ENCODE measurements at regions of chr10 and their contacts with region 1.

Region 1: DNA sequence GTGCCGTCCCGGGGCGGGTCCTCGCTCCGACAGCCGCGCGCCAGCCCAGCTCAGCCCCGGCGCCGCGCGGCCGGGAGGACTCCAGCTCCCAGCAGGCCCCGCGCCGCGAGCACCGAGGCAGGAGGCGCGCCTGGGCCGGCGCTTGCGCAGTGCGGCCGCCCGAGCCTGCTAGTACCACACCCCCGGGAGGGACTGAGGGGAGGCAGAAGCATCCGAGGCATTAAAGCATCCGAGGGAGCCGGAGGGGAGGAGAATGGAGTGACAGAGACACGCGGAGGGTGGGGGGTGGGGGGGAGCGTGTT is at the start of gene GRK5:
- DNase-seq: peak; percentile 96
- H3K4me3 Mint-ChIP-seq: peak within 1 kb of the TSS; percentile 100
- H3K27ac Mint-ChIP-seq: peak within 1 kb of the TSS; percentile 91
- H3K4me1 Mint-ChIP-seq: peaks cover 38% of the 10 kb centered on the region
- H3K27me3 Mint-ChIP-seq: no peaks in the 10 kb centered on the region
- total RNA-seq, gene GRK5: 22.7 to 23.0 TPM

Region 2: GRCh38 chr10:118734475-118734874 is 472.8 kb before region 1 on chr10:
- CTCF ChIA-PET with region 1: no interaction called
- POLR2A ChIA-PET with region 1: no interaction called
- intact Hi-C with region 1: no loop called
- DNase-seq: no peak
- H3K4me3 Mint-ChIP-seq: no peak overlapping the region
- H3K27ac Mint-ChIP-seq: no peak overlapping the region
- H3K4me1 Mint-ChIP-seq: peaks cover 78% of the 10 kb centered on the region
- H3K27me3 Mint-ChIP-seq: no peaks in the 10 kb centered on the region

Region 3: DNA sequence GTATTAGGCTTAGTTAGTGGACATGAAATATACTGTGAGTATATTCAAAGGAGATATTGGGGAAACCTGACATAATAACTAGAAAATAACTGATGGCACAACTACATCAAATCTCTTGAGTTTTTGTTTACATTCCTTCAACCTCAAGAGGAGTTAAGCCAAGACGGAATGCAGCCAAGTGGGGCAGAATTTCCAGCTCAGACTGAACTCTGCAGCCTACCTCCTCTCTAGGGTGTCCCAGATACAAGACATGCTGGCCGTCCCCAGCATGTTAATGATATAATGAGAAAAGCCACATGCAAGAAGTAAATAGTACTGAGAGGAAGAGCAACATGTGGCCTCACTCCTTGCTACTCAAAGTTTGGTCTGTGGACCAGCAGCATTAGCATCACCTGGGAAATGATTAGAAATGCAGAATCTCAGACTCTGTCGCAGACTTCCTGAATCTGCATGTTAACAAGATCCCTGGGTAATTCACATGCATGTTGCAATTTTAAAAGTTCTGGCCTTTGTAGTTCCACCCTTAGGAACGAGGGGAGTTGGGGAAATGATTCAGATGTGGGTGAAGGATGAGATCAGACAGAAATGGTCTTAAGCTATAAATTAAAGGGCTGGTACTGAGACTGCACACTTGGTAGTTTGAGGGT is 334.1 kb before region 1 on chr10:
- CTCF ChIA-PET with region 1: no interaction called
- POLR2A ChIA-PET with region 1: no interaction called
- intact Hi-C with region 1: no loop called
- DNase-seq: no peak
- H3K4me3 Mint-ChIP-seq: no peak overlapping the region
- H3K27ac Mint-ChIP-seq: no peak overlapping the region
- H3K4me1 Mint-ChIP-seq: no peaks in the 10 kb centered on the region
- H3K27me3 Mint-ChIP-seq: peaks cover 31% of the 10 kb centered on the region

Region 4: DNA sequence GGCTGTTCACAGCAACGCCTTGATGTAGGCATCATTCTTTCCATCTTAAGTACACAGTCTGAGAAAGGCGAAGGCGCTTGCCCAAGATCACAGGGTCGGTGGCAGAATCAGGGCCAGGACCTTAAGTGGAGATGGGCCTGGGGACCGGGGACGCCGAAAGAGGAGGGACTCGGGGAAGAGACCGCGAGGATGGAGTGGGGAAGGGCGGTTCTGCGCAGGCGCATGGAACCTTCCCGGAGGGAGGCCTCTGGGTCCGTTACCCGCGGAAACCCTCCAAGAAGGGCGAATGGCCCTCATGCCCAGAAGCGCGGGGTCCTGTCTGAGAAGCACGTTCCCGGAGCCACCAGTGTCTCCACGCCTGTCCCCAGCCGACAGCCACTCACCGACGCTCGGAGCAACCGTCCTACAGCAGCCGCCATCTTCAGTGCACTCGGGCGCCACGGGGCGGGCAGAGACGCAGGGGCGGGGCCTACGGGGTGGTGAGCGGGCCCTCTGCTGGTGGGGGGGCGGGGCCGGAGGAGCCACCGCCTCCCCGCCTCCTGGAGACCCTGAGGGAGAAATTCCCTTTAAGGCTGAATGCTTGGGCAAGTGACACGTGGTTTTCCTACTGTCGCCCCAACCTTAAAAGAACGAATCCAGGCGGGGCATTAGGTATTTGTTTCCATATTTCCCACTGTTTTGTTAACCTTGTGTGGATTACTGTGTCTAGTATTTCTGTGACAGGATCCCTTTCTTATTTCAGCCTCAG is 28.8 kb before region 1 on chr10 and contains the start of gene PRDX3:
- CTCF ChIA-PET with region 1: interaction called, 17 read pairs
- POLR2A ChIA-PET with region 1: interaction called, 10 read pairs
- intact Hi-C with region 1: loop called (anchors 1 kb)
- DNase-seq: peak; percentile 96
- H3K4me3 Mint-ChIP-seq: peak within 1 kb of the TSS; percentile 88
- H3K27ac Mint-ChIP-seq: peak within 1 kb of the TSS; percentile 94
- H3K4me1 Mint-ChIP-seq: peaks cover 35% of the 10 kb centered on the region
- H3K27me3 Mint-ChIP-seq: no peaks in the 10 kb centered on the region
- total RNA-seq, gene PRDX3: 173 to 182 TPM

Region 5: DNA sequence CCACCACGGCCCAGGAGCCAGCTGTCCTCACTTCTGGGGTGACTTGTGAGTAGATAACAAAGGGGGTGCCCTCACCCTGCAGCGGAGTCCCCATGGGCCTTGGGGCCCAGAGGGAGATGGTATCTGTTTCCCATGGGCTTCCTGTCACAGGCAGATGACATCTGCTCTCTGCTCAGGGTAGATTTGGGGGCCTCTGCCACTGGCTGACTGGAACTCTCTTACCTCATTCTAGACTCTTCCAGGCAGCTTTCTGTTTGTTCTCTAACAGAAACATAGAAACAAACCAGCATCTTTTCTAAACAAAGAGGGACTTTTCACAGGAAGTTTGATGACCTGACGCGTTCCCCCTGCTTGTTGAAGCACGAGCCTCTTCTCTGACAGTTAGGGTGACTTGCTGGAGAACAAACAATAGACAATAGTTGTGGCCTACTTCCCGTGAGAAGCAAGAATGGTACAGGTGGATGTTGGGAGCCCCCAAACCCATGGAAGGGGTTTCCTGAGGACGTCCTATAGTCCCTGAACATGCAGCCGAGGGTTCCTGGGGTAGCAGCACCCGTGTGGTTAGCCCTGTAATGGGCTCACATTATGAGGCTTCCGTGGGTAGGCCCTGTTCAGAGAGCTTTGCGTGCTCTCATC is 61.7 kb after region 1 on chr10:
- CTCF ChIA-PET with region 1: interaction called, 6 read pairs
- POLR2A ChIA-PET with region 1: interaction called, 5 read pairs
- intact Hi-C with region 1: loop called (anchors 1 kb)
- DNase-seq: peak; percentile 83
- H3K4me3 Mint-ChIP-seq: peak overlapping the region; percentile 7
- H3K27ac Mint-ChIP-seq: peak overlapping the region; percentile 97
- H3K4me1 Mint-ChIP-seq: peaks cover 43% of the 10 kb centered on the region
- H3K27me3 Mint-ChIP-seq: no peaks in the 10 kb centered on the region

Region 6: DNA sequence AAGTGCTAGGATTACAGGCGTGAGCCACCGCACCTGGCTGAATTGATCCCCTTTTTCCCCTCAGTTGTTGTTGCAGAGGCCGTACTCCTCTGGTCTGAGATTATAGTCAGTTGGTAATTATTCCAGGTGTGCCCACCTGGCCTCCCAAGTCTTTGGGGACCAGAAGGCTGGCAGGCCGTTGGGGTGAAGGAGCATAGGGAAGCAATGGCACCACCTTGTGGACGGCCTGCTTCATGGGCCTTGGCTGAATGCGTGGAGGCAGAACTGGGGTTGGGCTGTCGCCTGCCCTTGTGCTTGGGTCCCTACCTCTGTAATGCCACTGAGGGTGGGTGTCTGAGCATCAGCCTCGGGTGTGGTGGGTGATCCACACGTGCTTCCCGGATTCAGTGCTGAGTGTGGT is 209.5 kb after region 1 on chr10:
- CTCF ChIA-PET with region 1: interaction called, 53 read pairs
- POLR2A ChIA-PET with region 1: interaction called, 5 read pairs
- intact Hi-C with region 1: loop called (anchors 1 kb)
- DNase-seq: peak; percentile 81
- H3K4me3 Mint-ChIP-seq: no peak overlapping the region
- H3K27ac Mint-ChIP-seq: no peak overlapping the region
- H3K4me1 Mint-ChIP-seq: no peaks in the 10 kb centered on the region
- H3K27me3 Mint-ChIP-seq: no peaks in the 10 kb centered on the region

Region 7: DNA sequence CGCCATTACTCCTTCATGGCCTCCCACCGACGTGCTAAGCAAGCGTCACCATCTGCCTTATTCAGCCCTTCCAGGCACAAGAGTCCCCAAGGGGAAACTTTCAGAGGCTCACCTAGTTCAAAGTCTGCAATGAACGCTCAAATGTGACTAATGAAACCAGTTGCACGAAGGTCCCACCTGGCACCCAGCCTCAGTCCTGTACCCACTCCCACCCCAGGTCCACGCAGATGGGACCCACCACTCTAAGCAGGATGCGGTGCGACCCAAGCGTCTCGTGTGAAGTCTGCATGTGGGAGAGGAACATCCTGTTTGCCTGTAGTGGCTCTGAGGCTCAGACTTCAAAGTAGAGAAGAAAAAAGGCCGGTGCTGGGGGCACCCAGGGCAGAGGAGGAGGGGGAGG is 294.9 kb after region 1 on chr10:
- CTCF ChIA-PET with region 1: no interaction called
- POLR2A ChIA-PET with region 1: no interaction called
- intact Hi-C with region 1: loop called (anchors 2 kb)
- DNase-seq: peak; percentile 88
- H3K4me3 Mint-ChIP-seq: peak overlapping the region; percentile 59
- H3K27ac Mint-ChIP-seq: peak overlapping the region; percentile 99
- H3K4me1 Mint-ChIP-seq: peaks cover 83% of the 10 kb centered on the region
- H3K27me3 Mint-ChIP-seq: no peaks in the 10 kb centered on the region

Region 8: DNA sequence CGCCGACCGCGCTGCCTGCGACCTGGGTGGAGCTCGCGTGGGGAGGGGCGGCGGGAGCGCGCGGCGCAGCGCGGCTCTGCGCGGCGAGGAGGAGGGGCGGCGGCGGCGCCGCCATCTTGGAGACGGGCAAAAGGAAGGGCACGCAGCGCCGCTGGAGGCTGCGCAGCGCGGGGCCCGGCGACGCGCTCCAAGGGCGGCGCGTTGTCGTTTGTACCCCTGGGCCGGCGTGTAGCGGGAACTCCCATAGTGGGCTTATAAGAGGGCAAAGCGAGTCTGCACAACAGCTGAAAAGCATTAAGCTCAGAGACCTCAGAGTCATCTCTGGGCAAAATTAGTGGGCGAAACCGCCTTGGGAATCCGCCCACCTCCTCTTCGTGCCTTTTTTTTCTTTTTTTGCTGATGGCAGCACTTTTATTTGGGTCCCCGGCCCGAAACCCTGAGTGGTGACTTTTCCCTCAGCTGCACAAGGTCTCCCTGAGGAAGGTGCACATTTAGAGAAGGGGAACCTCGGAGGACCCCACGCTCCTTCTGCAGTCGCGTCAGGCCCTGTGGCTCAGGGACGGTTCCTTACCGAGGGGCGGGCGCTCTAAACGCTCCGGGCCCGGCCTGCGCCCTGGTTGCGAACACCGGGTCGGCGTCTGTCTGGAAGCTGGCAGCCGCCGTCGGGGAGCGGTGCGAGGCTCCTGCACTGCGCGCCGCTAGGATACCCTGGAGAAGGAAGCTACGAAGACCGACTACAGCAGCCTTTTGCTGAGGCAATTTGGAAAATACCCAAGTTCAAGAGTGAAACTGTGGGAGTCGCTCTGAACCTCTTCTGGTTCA is 665.8 kb after region 1 on chr10:
- CTCF ChIA-PET with region 1: no interaction called
- POLR2A ChIA-PET with region 1: no interaction called
- intact Hi-C with region 1: loop called (anchors 5 kb)
- DNase-seq: peak; percentile 91
- H3K4me3 Mint-ChIP-seq: peak overlapping the region; percentile 80
- H3K27ac Mint-ChIP-seq: peak overlapping the region; percentile 87
- H3K4me1 Mint-ChIP-seq: peaks cover 31% of the 10 kb centered on the region
- H3K27me3 Mint-ChIP-seq: no peaks in the 10 kb centered on the region

Measured in activated CD4-positive, alpha-beta memory T cell treated with anti-CD3 and anti-CD28 coated beads for 36 hours (primary cell).